Caco-2 (cell line): ENCODE measurements at regions of chr9 and their contacts with region 1.

Region 1: DNA sequence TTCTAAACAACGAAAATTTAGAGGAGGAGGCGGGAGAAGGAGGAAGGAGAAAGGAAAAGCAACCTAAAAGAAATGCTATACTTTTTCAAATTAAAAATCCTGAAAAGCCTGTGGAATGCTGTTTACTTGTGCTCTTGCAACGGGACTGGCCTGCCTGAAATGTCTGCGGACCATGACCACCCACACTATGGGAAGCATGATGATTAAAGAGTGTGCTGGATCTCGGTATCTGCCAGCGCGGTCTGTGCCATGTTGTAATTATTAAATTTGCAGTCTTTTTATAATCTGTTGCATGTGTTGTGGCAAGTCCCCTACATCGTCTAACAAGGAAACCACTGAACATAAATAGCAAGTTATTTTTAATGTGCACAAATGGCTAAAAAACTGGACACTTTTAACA is 111.4 kb downstream of the FANCC start:
- DNase-seq: no peak
- H3K4me3 ChIP-seq: no peak overlapping the region
- H3K4me3 Mint-ChIP-seq: peak overlapping the region; percentile 66
- H3K27ac Mint-ChIP-seq: peak overlapping the region; percentile 53
- H3K4me1 ChIP-seq: peaks cover 38% of the 10 kb centered on the region
- H3K4me1 Mint-ChIP-seq: peaks cover 31% of the 10 kb centered on the region
- H3K27me3 ChIP-seq: no peaks in the 10 kb centered on the region
- H3K27me3 Mint-ChIP-seq: no peaks in the 10 kb centered on the region
- CTCF ChIP-seq: no peak

Region 2: DNA sequence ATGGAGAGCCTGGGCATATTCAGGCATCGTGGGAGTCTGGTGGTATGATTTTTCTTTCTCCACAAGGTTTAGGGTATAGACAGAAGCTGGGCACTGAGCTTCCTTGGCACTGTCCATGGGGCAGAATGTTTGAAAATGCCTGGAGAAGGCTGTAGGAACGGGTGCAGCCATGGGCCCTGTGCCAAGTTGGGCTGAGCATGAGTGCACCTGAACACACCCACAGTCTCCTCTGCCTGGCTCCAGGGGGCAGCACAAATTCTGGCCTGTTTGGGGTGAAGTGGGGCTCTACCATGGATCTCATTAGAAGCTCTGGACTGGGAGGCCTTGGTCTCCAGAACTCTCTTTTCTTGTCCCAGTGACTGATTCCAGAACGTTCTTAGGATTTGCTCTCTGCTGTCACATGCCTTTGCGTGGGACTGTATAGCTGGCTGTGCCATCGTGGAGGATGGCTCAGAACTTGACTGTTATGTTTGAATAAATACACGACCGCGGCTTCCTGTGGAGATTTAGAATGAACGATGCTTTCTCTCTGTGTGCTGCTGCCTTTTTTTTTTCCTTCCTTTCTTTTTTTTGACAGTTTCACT is 118.4 kb before region 1 on chr9:
- CTCF ChIA-PET with region 1: no interaction called
- POLR2A ChIA-PET with region 1: no interaction called
- intact Hi-C with region 1: no loop called
- DNase-seq: no peak
- H3K4me3 ChIP-seq: no peak overlapping the region
- H3K4me3 Mint-ChIP-seq: no peak overlapping the region
- H3K27ac Mint-ChIP-seq: no peak overlapping the region
- H3K4me1 ChIP-seq: peaks cover 25% of the 10 kb centered on the region
- H3K4me1 Mint-ChIP-seq: peaks cover 24% of the 10 kb centered on the region
- H3K27me3 ChIP-seq: no peaks in the 10 kb centered on the region
- H3K27me3 Mint-ChIP-seq: no peaks in the 10 kb centered on the region
- CTCF ChIP-seq: no peak

Region 3: GRCh38 chr9:95181226-95181818 is 24.8 kb before region 1 on chr9:
- CTCF ChIA-PET with region 1: no interaction called
- POLR2A ChIA-PET with region 1: no interaction called
- intact Hi-C with region 1: no loop called
- DNase-seq: no peak
- H3K4me3 ChIP-seq: no peak overlapping the region
- H3K4me3 Mint-ChIP-seq: no peak overlapping the region
- H3K27ac Mint-ChIP-seq: no peak overlapping the region
- H3K4me1 ChIP-seq: no peaks in the 10 kb centered on the region; the same call in 1 of the 2 replicates
- H3K4me1 Mint-ChIP-seq: peaks cover 4% of the 10 kb centered on the region
- H3K27me3 ChIP-seq: no peaks in the 10 kb centered on the region
- H3K27me3 Mint-ChIP-seq: no peaks in the 10 kb centered on the region
- CTCF ChIP-seq: peak; percentile 34 to 62

Region 4: GRCh38 chr9:95224376-95225019 is 18.4 kb after region 1 on chr9:
- CTCF ChIA-PET with region 1: no interaction called
- POLR2A ChIA-PET with region 1: no interaction called
- intact Hi-C with region 1: loop called (anchors 2 kb)
- DNase-seq: no peak
- H3K4me3 ChIP-seq: no peak overlapping the region
- H3K4me3 Mint-ChIP-seq: no peak overlapping the region
- H3K27ac Mint-ChIP-seq: no peak overlapping the region
- H3K4me1 ChIP-seq: peaks cover 21% of the 10 kb centered on the region
- H3K4me1 Mint-ChIP-seq: peaks cover 7% of the 10 kb centered on the region
- H3K27me3 ChIP-seq: no peaks in the 10 kb centered on the region
- H3K27me3 Mint-ChIP-seq: no peaks in the 10 kb centered on the region
- CTCF ChIP-seq: no peak

Region 5: GRCh38 chr9:95434116-95435073 is 228.3 kb after region 1 on chr9:
- CTCF ChIA-PET with region 1: no interaction called
- POLR2A ChIA-PET with region 1: no interaction called
- intact Hi-C with region 1: no loop called
- DNase-seq: no peak
- H3K4me3 ChIP-seq: no peak overlapping the region
- H3K4me3 Mint-ChIP-seq: no peak overlapping the region
- H3K27ac Mint-ChIP-seq: no peak overlapping the region
- H3K4me1 ChIP-seq: no peaks in the 10 kb centered on the region
- H3K4me1 Mint-ChIP-seq: no peaks in the 10 kb centered on the region
- H3K27me3 ChIP-seq: no peaks in the 10 kb centered on the region
- H3K27me3 Mint-ChIP-seq: no peaks in the 10 kb centered on the region
- CTCF ChIP-seq: no peak